Activated CD8-positive, alpha-beta T cell treated with anti-CD3 and anti-CD28 coated beads for 36 hours (primary cell): ENCODE measurements at regions of chr7 and their contacts with region 1.

Region 1: DNA sequence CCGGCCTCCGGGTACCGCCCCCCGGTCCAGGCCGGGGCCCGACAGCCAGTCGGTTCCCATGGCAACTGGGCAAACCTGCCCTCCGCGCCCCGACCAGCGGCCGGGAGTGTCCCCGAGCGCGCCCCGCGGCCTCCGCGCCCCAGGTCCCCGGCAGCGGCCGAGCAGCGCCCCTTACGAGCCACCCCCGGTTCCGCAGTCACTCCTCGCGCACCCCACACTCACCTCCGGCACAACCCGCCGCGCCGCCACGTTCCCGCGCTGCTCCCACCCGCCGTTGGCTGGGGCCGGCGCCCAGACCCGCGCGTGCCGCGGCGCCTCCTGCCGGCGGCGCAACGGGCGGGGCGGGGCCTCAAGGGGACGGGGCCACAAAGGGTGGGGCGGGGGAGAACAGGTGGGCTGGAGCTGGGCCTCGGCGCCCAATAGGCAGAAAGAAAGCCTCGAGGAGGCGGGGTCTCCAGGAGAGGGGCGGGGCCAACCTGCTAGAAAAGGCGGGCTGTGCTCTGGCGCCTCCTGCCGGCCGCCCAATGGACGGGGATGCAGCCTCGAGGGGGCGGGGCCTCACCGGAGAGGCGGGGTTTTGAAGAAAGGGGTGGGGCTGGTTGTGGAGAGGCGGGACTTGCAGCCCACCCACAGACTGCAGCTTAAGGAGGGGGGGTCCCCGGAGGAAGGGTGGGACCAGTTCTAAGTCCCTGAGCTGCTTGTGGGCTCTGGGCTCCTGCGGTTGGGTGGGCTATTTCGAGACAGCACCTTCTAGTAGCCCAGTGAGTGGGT is at the start of gene RADIL:
- DNase-seq: peak; percentile 97
- ATAC-seq: peak; percentile 100
- H3K4me3 Mint-ChIP-seq: peak within 1 kb of the TSS; percentile 62
- H3K27ac Mint-ChIP-seq: no peak within 1 kb of the TSS
- H3K4me1 Mint-ChIP-seq: peaks cover 7% of the 10 kb centered on the region
- H3K27me3 Mint-ChIP-seq: peaks cover 17% of the 10 kb centered on the region
- CTCF ChIP-seq: peak; percentile 76
- total RNA-seq, gene RADIL: 0.65 to 0.77 TPM

Region 2: DNA sequence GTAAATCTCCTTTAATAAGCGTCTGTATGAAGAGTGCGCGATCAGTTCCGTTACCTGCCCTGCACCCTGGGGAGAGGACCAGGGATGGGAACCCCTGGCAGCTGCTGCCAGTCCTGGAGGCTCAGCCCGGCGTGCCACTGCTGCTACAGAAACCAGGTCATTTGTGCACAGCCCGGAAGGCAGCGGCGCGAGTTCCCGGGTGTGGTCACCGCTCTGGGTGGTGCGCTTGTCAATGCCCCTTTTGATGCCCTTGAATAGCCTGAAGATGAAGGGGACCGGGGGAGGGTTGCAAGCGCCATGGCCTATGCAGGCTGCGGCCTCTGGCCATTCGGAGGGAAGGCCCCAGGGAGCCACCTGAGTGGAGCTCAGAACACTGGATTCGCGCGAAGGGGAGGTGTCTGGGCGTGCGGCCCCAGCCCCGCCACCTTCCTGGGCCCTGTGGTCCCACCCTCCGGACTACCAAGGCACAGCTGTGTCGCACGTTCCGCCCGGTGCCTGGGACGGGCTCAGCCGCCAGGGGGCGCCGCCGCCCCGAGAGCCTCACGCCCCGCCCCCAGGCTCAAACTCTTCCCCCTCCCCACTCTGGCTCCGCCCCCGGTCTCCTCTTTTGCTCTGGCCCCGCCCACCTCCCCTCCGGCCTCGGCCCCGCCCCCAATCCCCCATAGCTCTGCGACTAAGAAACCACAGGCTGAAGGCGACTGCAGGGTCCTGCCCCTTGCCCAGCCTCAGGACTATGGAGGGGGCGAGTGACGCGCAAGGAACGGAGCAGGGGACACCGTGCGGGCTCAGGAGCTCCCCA is 91.6 kb before region 1 on chr7:
- CTCF ChIA-PET with region 1: interaction called, 43 read pairs
- POLR2A ChIA-PET with region 1: interaction called, 4 read pairs
- intact Hi-C with region 1: loop called (anchors 10 kb)
- DNase-seq: peak; percentile 82
- ATAC-seq: peak; percentile 93
- H3K4me3 Mint-ChIP-seq: no peak overlapping the region
- H3K27ac Mint-ChIP-seq: no peak overlapping the region
- H3K4me1 Mint-ChIP-seq: no peaks in the 10 kb centered on the region
- H3K27me3 Mint-ChIP-seq: no peaks in the 10 kb centered on the region
- CTCF ChIP-seq: peak; percentile 80

Region 3: DNA sequence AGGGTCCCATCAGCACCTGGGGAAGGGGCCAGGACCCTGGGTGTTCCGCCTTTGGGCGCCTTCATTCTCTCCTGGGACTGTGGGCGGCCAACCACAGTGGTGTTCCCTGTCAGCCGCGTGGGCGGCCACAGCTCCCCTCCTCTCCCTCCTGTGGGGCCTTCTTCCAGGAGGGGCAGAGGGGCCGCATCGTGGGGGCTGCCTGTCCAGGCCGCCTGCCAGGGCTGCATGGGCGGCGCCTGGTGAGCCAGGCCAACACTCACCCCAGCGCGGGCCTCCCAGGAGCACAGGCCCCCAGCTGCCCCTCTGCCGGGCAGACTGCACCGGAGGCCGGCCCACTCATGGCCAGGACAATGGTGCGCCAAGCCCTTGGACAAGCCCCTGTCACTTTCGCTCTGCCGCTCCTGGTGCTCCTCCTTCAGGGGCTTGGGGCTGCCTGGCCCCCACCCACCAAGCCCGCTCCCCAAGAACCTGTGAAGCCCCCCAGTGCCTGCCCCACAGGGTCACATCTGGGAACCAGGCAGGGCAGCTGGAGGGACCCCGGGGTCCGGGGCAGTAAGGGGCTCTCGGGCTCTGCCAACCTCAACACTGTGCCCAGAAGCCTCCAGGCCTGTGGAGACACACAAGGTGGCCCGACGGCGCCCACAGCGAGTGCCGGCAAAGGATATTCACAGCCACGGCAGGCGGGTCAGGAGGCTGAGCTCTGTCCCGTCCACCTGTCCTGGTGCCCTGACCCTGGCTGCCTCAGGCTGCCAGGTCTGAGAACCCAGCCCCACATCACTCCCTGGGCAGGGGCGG is 65.4 kb before region 1 on chr7:
- CTCF ChIA-PET with region 1: no interaction called
- POLR2A ChIA-PET with region 1: no interaction called
- intact Hi-C with region 1: no loop called
- DNase-seq: no peak
- ATAC-seq: no peak
- H3K4me3 Mint-ChIP-seq: no peak overlapping the region
- H3K27ac Mint-ChIP-seq: no peak overlapping the region
- H3K4me1 Mint-ChIP-seq: no peaks in the 10 kb centered on the region
- H3K27me3 Mint-ChIP-seq: peaks cover 8% of the 10 kb centered on the region
- CTCF ChIP-seq: no peak

Region 4: GRCh38 chr7:4830176-4830575 is 53.4 kb before region 1 on chr7:
- CTCF ChIA-PET with region 1: interaction called, 18 read pairs
- POLR2A ChIA-PET with region 1: no interaction called
- intact Hi-C with region 1: no loop called
- DNase-seq: peak; percentile 78
- ATAC-seq: peak; percentile 94
- H3K4me3 Mint-ChIP-seq: no peak overlapping the region
- H3K27ac Mint-ChIP-seq: no peak overlapping the region
- H3K4me1 Mint-ChIP-seq: peaks cover 2% of the 10 kb centered on the region
- H3K27me3 Mint-ChIP-seq: no peaks in the 10 kb centered on the region
- CTCF ChIP-seq: peak; percentile 70

Region 5: DNA sequence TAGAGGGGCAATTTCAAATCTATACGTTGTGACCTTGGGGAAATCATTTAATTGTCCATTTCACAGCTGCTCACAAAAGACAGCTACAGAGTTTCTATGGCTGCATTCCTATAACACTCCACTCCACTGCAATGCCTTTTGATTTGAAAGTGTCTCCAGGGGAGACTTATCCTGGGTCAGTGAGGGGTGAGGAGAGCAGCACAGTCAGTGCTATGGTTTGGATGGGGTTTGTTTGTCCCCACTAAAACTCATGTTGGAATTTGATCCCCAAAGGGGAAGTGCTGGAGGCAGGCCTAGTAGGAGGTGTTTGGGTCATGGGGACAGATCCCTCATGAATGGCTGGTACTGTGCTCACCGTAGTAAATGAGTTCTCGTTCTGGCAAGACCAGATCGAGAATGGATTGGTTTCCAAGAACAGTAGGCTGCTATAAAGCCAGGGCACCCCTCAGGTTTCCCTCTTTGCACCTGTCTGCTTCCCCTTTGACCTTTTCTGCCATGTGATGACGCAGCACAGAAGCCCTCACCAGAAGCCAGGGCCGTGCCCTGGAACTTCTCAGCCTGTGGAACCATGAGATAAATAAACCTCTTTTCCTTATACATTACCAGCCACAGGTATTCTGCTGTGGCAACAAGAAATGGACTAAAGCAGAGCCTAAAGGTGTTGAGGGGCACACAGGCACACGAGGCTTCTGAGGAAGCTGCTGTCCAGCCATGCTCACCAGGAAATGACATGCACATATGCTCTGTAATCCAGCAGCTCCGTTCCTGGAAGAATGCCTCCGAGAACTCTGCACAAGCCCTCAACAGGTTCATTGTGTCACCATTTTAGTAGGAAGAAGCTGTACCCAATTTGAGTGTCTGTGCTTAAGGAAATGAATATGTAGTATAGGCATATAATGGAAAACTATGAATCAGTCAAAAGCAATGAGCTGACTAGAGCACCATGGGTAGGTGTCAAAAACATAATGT is 16.7 kb before region 1 on chr7:
- CTCF ChIA-PET with region 1: interaction called, 13 read pairs
- POLR2A ChIA-PET with region 1: no interaction called
- intact Hi-C with region 1: no loop called
- DNase-seq: no peak
- ATAC-seq: no peak
- H3K4me3 Mint-ChIP-seq: no peak overlapping the region
- H3K27ac Mint-ChIP-seq: no peak overlapping the region
- H3K4me1 Mint-ChIP-seq: peaks cover 3% of the 10 kb centered on the region
- H3K27me3 Mint-ChIP-seq: peaks cover 24% of the 10 kb centered on the region
- CTCF ChIP-seq: no peak

Region 6: GRCh38 chr7:5179756-5180155 is 296.2 kb after region 1 on chr7:
- CTCF ChIA-PET with region 1: no interaction called
- POLR2A ChIA-PET with region 1: no interaction called
- intact Hi-C with region 1: no loop called
- DNase-seq: no peak
- ATAC-seq: no peak
- H3K4me3 Mint-ChIP-seq: no peak overlapping the region
- H3K27ac Mint-ChIP-seq: no peak overlapping the region
- H3K4me1 Mint-ChIP-seq: peaks cover 4% of the 10 kb centered on the region
- H3K27me3 Mint-ChIP-seq: no peaks in the 10 kb centered on the region
- CTCF ChIP-seq: no peak